A549 (cell line): ENCODE measurements at regions of chr16 and their contacts with region 1.

Region 1: GRCh38 chr16:54286090-54286993 is at the start of gene IRX3:
- DNase-seq: peak; percentile 87 to 88
- ATAC-seq: peak; percentile 68 to 81
- H3K4me3 ChIP-seq: peak within 1 kb of the TSS; percentile 80
- H3K27ac ChIP-seq: peak within 1 kb of the TSS; percentile 84 to 92
- H3K4me1 ChIP-seq: peaks cover 20% of the 10 kb centered on the region; the same call in 1 of the 3 replicates
- CTCF ChIP-seq: no peak
- EP300 ChIP-seq: no peak
- POLR2A ChIP-seq: peak; percentile 14; the same call in 1 of the 2 replicates
- RAD21 ChIP-seq: no peak
- polyA plus RNA-seq, gene IRX3: 0.54 and 1.7 TPM in 2 replicates

Region 2: GRCh38 chr16:54135951-54136625 is 150.3 kb before region 1 on chr16:
- CTCF ChIA-PET with region 1: no interaction called
- POLR2A ChIA-PET with region 1: no interaction called
- DNase-seq: peak in 1 of 2 experiments; percentile 4
- ATAC-seq: peak; percentile 44 to 50; a peak in 4 of 6 replicates
- H3K4me3 ChIP-seq: no peak overlapping the region
- H3K27ac ChIP-seq: peak overlapping the region in 1 of 2 experiments; percentile 36; a peak in 2 of 6 replicates
- H3K4me1 ChIP-seq: no peaks in the 10 kb centered on the region
- CTCF ChIP-seq: no peak
- EP300 ChIP-seq: no peak
- POLR2A ChIP-seq: no peak
- RAD21 ChIP-seq: no peak

Region 3: GRCh38 chr16:54165174-54165911 is 121.0 kb before region 1 on chr16:
- CTCF ChIA-PET with region 1: no interaction called
- POLR2A ChIA-PET with region 1: no interaction called
- DNase-seq: peak in 1 of 2 experiments; percentile 25
- ATAC-seq: peak; percentile 62 to 76; a peak in 5 of 6 replicates
- H3K4me3 ChIP-seq: no peak overlapping the region
- H3K27ac ChIP-seq: peak overlapping the region in 1 of 2 experiments; percentile 40; a peak in 1 of 6 replicates
- H3K4me1 ChIP-seq: peaks cover 9% of the 10 kb centered on the region; the same call in 2 of the 3 replicates
- CTCF ChIP-seq: no peak
- EP300 ChIP-seq: no peak
- POLR2A ChIP-seq: no peak
- RAD21 ChIP-seq: no peak

Region 4: DNA sequence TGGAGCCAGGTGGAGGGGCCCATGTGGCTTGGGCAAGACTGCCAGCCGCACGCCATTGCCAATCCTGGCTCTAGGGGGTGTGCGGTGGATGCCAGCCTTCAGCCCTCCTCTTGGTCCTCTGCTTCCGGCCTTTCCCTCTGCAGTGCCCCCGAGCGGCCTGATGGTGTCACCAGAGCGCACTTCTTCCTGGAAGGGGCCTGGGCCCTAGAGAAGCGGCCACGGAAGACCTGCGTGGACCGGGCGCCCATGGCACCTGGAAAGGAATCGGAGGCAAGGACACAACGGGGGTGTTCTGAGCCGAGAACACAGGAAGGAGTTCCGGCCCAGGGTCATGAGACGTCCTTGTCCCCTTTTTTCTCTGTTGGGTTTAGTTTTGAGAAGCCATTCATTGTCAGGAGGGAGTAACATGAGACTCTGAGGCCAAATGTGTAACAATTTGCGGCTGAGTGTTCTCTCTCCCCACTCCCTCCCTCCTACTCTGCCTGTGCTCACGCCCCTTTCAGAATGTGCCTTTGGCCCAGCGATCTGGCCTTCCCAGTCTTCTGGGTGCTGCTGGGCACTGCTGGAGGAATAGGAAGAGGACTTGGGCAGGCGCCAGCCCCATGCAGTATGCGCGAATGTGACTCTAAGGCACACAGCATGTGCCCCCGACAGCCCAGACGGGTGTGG is 92.5 kb before region 1 on chr16:
- CTCF ChIA-PET with region 1: no interaction called
- POLR2A ChIA-PET with region 1: no interaction called
- DNase-seq: peak; percentile 47 to 68
- ATAC-seq: peak; percentile 85 to 95
- H3K4me3 ChIP-seq: no peak overlapping the region
- H3K27ac ChIP-seq: peak overlapping the region in 1 of 2 experiments; percentile 44; a peak in 1 of 6 replicates
- H3K4me1 ChIP-seq: 0 out of 3 replicates have a peak, but pooled peaks cover 2% of the 10 kb centered on the region
- CTCF ChIP-seq: peak; percentile 42
- EP300 ChIP-seq: no peak
- POLR2A ChIP-seq: no peak
- RAD21 ChIP-seq: peak in 1 of 2 experiments; percentile 44; a peak in 3 of 5 replicates

Region 5: GRCh38 chr16:54270711-54271110 is 15.6 kb before region 1 on chr16:
- CTCF ChIA-PET with region 1: interaction called, 12 read pairs
- POLR2A ChIA-PET with region 1: no interaction called
- DNase-seq: no peak
- ATAC-seq: no peak
- H3K4me3 ChIP-seq: no peak overlapping the region
- H3K27ac ChIP-seq: no peak overlapping the region
- H3K4me1 ChIP-seq: no peaks in the 10 kb centered on the region
- CTCF ChIP-seq: no peak
- EP300 ChIP-seq: no peak
- POLR2A ChIP-seq: no peak
- RAD21 ChIP-seq: no peak

Region 6: GRCh38 chr16:54373534-54374520 is 87.5 kb after region 1 on chr16:
- CTCF ChIA-PET with region 1: no interaction called
- POLR2A ChIA-PET with region 1: no interaction called
- DNase-seq: peak; percentile 53 to 57
- ATAC-seq: peak; percentile 86 to 90
- H3K4me3 ChIP-seq: no peak overlapping the region
- H3K27ac ChIP-seq: no peak overlapping the region
- H3K4me1 ChIP-seq: peaks cover 9% of the 10 kb centered on the region
- CTCF ChIP-seq: no peak
- EP300 ChIP-seq: no peak
- POLR2A ChIP-seq: no peak
- RAD21 ChIP-seq: 0 out of 5 replicates have a peak, but pooled peaks of 1 of the 2 experiments have one; percentile 4

Region 7: GRCh38 chr16:54929090-54930004 is 643.0 kb after region 1 on chr16:
- CTCF ChIA-PET with region 1: interaction called, 7 read pairs
- POLR2A ChIA-PET with region 1: interaction called, 14 read pairs
- DNase-seq: peak; percentile 86 to 98
- ATAC-seq: peak; percentile 65 to 90
- H3K4me3 ChIP-seq: peak overlapping the region; percentile 79
- H3K27ac ChIP-seq: peak overlapping the region; percentile 96 to 99
- H3K4me1 ChIP-seq: peaks cover 22% of the 10 kb centered on the region
- CTCF ChIP-seq: peak; percentile 24; the same call in 2 of the 3 replicates
- EP300 ChIP-seq: no peak
- POLR2A ChIP-seq: peak; percentile 33; the same call in 1 of the 2 replicates
- RAD21 ChIP-seq: peak; percentile 37 to 38; a peak in 4 of 5 replicates